PC-9 (cell line): ENCODE measurements at regions of chr3 and their contacts with region 1.

Region 1: DNA sequence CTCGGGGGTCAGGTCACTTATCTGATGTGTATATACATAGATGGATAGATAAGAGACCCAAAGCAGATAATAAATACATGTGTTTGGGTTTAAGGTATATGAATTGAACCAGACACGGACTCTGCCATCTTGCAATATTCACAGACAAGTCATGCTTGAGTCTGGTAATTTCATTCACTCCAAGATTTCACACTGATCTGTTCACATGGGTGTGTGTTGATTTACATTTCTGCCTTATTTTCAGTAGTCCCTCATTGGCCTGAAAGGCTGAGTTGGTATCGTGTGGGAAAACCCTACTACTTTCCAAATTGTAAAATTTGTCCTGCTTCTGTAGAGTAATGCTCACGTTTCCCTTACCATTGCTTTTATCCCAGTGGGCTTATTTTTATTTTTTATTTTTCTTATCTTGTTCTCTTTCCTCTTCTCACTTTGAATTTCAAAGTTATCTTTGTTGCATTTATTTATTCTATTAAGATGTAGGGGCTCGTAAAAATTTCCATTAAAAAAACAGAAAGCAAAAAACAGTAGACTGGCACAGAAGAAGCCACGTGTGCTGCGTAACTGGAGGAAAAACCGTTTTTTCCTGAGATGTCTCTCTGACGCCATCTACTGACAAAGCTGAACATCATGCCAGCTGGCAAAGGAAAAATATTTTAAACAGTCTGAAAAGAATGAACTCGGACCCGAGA is 10.8 kb upstream of the MFSD1 start:
- DNase-seq: peak in 1 of 2 experiments; percentile 64
- H3K4me3 ChIP-seq: peak overlapping the region; percentile 25; the same call in 1 of the 2 replicates
- H3K27ac ChIP-seq: no peak overlapping the region
- H3K4me1 ChIP-seq: peaks cover 59% of the 10 kb centered on the region
- H3K27me3 ChIP-seq: no peaks in the 10 kb centered on the region
- CTCF ChIP-seq: peak; percentile 90

Region 2: GRCh38 chr3:158539414-158540014 is 251.5 kb before region 1 on chr3:
- CTCF ChIA-PET with region 1: interaction called, 6 read pairs
- POLR2A ChIA-PET with region 1: interaction called, 6 read pairs
- intact Hi-C with region 1: loop called (anchors 1 kb)
- DNase-seq: peak in 1 of 2 experiments; percentile 12
- H3K4me3 ChIP-seq: no peak overlapping the region
- H3K27ac ChIP-seq: no peak overlapping the region
- H3K4me1 ChIP-seq: no peaks in the 10 kb centered on the region
- H3K27me3 ChIP-seq: no peaks in the 10 kb centered on the region
- CTCF ChIP-seq: peak; percentile 78

Region 3: DNA sequence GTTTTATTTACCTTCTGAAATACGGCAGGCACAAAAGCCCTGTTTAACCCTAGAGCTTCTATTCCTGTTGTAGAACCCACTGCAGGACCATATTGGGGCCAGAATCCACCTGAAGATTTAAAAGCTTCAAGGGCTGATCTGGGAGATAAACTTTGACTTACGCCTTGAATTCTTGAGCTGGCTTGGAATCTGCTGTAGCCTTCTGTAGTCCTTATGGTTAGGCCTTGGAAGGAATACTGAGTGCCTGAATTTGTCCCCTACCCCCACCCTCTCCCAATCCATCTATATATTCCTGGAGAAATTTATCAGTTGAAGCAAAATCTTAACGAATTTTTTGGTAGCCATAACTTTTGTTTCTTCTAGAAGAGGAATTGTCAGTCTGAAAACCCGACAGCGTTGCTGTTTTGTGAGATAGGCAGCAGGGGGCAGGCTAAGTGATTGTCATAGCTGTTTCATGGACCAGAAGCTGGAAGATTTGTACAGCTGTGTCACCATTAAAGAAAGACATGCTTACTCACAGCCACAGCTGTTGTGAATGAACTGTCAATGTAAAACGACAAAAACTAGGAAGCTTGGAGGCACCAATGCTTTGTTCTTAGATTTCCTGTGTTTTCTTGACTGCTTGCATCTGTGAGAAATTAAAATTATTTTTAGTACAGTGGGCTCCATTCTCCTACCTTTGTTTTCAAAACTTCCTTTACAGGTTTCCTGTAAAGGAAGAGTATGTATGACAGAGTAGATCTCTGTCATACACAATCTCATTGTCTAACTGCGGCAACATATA is 131.4 kb before region 1 on chr3:
- CTCF ChIA-PET with region 1: interaction called, 15 read pairs
- POLR2A ChIA-PET with region 1: interaction called, 3 read pairs
- intact Hi-C with region 1: loop called (anchors 1 kb)
- DNase-seq: peak; percentile 39 to 57
- H3K4me3 ChIP-seq: no peak overlapping the region
- H3K27ac ChIP-seq: peak overlapping the region; percentile 11; the same call in 1 of the 2 replicates
- H3K4me1 ChIP-seq: no peaks in the 10 kb centered on the region
- H3K27me3 ChIP-seq: no peaks in the 10 kb centered on the region
- CTCF ChIP-seq: peak; percentile 85

Region 4: GRCh38 chr3:158718490-158719170 is 72.4 kb before region 1 on chr3:
- CTCF ChIA-PET with region 1: interaction called, 11 read pairs
- POLR2A ChIA-PET with region 1: no interaction called
- intact Hi-C with region 1: no loop called
- DNase-seq: peak; percentile 87 to 99
- H3K4me3 ChIP-seq: no peak overlapping the region; the same call in 1 of the 2 replicates
- H3K27ac ChIP-seq: peak overlapping the region; percentile 72
- H3K4me1 ChIP-seq: peaks cover 75% of the 10 kb centered on the region
- H3K27me3 ChIP-seq: no peaks in the 10 kb centered on the region
- CTCF ChIP-seq: no peak

Region 5: GRCh38 chr3:158727206-158728060 is 63.6 kb before region 1 on chr3:
- CTCF ChIA-PET with region 1: interaction called, 53 read pairs
- POLR2A ChIA-PET with region 1: interaction called, 4 read pairs
- intact Hi-C with region 1: loop called (anchors 1 kb)
- DNase-seq: peak; percentile 54 to 74
- H3K4me3 ChIP-seq: peak overlapping the region; percentile 30; the same call in 1 of the 2 replicates
- H3K27ac ChIP-seq: peak overlapping the region; percentile 78
- H3K4me1 ChIP-seq: peaks cover 80% of the 10 kb centered on the region
- H3K27me3 ChIP-seq: no peaks in the 10 kb centered on the region
- CTCF ChIP-seq: peak; percentile 94

Region 6: GRCh38 chr3:158845765-158846350 is 54.8 kb after region 1 on chr3:
- CTCF ChIA-PET with region 1: no interaction called
- POLR2A ChIA-PET with region 1: no interaction called
- intact Hi-C with region 1: loop called (anchors 2 kb)
- DNase-seq: peak; percentile 43 to 49
- H3K4me3 ChIP-seq: no peak overlapping the region
- H3K27ac ChIP-seq: no peak overlapping the region
- H3K4me1 ChIP-seq: no peaks in the 10 kb centered on the region
- H3K27me3 ChIP-seq: no peaks in the 10 kb centered on the region
- CTCF ChIP-seq: peak; percentile 96

Region 7: DNA sequence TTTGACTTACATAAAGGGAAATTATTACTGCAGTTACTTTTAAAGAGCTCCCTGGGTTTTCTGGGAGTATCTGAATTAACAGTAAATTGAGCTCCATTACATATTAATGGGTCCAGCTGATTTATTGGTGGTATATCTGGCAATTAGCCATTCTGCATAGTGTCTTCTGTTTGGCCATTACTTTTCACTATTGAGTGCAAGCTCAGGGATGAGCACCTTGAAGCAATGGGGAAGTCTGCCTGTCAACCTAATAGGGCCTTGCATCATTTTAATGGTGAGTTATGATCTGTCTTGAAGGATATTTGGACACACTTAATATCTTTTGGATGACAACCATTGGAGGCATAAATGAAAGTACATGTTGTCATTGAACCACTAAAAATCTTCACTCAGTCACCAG is 84.7 kb after region 1 on chr3:
- CTCF ChIA-PET with region 1: no interaction called
- POLR2A ChIA-PET with region 1: no interaction called
- intact Hi-C with region 1: no loop called
- DNase-seq: no peak
- H3K4me3 ChIP-seq: no peak overlapping the region
- H3K27ac ChIP-seq: no peak overlapping the region
- H3K4me1 ChIP-seq: no peaks in the 10 kb centered on the region
- H3K27me3 ChIP-seq: no peaks in the 10 kb centered on the region
- CTCF ChIP-seq: no peak